Aorta (tissue), 5 donors: ENCODE measurements at regions of chr16 and their contacts with region 1.

Region 1: GRCh38 chr16:66824006-66824405 is 6.8 kb downstream of the NAE1 start:
- DNase-seq: no peak
- ATAC-seq: no peak
- H3K4me3 ChIP-seq: no peak overlapping the region
- H3K27ac ChIP-seq: no peak overlapping the region
- H3K4me1 ChIP-seq: no peaks in the 10 kb centered on the region
- H3K27me3 ChIP-seq: no peaks in the 10 kb centered on the region

Region 2: GRCh38 chr16:66728117-66728787 is 95.8 kb before region 1 on chr16:
- intact Hi-C with region 1: loop called in 1 of 2 experiments (anchors 10 kb)
- DNase-seq: peak in 1 of 2 donors; percentile 8
- ATAC-seq: peak; percentile 86
- H3K4me3 ChIP-seq: no peak overlapping the region
- H3K27ac ChIP-seq: no peak overlapping the region
- H3K4me1 ChIP-seq: no peaks in the 10 kb centered on the region
- H3K27me3 ChIP-seq: no peaks in the 10 kb centered on the region

Region 3: DNA sequence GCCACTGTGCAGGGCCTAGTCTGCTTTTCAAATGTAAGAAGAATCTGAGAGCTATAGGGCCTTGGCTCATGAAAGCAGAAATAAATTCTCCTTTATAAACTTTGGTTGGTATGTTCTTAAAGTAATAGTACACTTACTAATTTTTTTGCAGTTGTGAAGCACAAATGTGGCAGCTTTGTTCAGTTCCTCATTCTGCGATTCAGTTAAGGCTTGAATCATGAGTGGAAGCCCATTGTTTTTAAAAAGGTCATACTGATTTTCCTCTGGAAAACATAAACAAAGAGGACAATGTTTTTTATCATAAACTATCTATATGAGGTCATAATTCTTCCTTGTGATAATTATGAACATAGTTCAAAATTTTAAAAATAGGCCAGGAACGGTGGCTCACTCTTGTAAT is 49.0 kb before region 1 on chr16:
- intact Hi-C with region 1: no loop called
- DNase-seq: no peak
- ATAC-seq: no peak
- H3K4me3 ChIP-seq: no peak overlapping the region
- H3K27ac ChIP-seq: no peak overlapping the region
- H3K4me1 ChIP-seq: no peaks in the 10 kb centered on the region
- H3K27me3 ChIP-seq: no peaks in the 10 kb centered on the region